ENCODE measurements at regions of chr19 and their contacts with region 1.

Region 1: DNA sequence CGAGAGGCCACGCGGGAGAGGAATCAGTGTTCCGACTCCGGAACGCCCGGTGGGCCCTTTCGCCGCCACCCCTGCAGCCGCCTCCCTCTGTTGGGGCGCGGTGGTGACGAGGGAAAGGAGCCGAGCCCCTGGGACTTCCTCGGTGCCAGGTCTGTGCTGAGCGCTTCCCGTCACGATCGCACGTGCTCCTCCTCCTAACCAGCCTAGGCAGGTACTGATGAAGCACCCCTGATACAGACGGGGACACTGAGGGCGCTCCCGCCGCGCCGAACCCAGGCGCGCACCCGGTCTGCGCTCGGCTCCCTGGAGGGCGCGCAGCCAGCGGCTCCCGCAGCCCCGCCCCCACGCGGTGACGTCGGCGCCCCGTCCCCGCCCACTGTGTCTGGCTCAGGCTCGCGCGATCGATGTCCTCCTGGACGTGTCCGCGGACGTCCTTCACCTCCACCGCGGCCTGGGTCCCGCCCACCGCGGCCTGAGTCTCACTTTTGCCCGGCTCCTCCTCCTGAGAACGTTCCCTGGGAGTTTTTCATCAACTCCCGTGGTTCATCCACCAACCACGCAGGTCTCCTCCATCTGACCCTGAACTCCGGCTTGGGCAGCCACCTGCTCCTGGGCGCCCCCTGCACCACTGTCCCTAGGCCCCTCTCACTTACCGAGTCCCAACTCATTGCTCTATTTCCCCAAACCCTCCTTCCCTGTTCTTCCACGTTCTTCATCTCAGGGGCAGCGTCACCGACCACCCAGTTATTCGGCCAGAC is 2.6 kb upstream of the KLK15 start:
- DNase-seq: peak; percentile 92 to 93
- H3K4me3 ChIP-seq: peak overlapping the region in 2 of 3 donors; percentile 48 to 49
- H3K27ac ChIP-seq: peak overlapping the region; percentile 61 to 96 (median 81)
- H3K4me1 ChIP-seq: peaks cover 23 to 34% of the 10 kb centered on the region in 2 donors
- H3K27me3 ChIP-seq: no peaks in the 10 kb centered on the region
- CTCF ChIP-seq: no peak
- POLR2A ChIP-seq: peak; percentile 57 to 98

Region 2: DNA sequence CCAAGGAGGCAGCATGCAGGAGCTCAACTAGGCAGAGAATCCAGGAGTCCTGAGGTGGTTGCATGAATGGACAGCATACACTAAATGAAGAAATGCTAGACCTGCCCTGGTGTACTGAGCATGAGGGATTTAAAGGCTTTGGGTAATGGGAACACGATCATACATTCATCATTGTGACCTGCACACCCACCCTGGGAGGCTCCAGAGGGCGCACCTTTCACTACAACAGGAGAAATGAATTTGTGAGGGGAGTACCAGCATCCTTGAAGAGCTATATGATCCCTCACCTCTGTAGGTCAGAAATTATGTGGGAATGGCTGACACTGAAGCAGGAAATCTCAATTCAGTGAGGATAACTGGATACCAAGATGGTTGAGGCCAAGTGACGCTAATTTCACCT is 46.2 kb after region 1 on chr19:
- intact Hi-C with region 1: loop called (anchors 5 kb)
- DNase-seq: no peak
- H3K4me3 ChIP-seq: no peak overlapping the region
- H3K27ac ChIP-seq: no peak overlapping the region
- H3K4me1 ChIP-seq: peaks cover 18 to 24% of the 10 kb centered on the region in 2 donors
- H3K27me3 ChIP-seq: no peaks in the 10 kb centered on the region
- CTCF ChIP-seq: no peak
- POLR2A ChIP-seq: no peak

Measured in thyroid gland (tissue), 4 donors.